HepG2 (cell line): ENCODE measurements at regions of chr9 and their contacts with region 1.

Region 1: DNA sequence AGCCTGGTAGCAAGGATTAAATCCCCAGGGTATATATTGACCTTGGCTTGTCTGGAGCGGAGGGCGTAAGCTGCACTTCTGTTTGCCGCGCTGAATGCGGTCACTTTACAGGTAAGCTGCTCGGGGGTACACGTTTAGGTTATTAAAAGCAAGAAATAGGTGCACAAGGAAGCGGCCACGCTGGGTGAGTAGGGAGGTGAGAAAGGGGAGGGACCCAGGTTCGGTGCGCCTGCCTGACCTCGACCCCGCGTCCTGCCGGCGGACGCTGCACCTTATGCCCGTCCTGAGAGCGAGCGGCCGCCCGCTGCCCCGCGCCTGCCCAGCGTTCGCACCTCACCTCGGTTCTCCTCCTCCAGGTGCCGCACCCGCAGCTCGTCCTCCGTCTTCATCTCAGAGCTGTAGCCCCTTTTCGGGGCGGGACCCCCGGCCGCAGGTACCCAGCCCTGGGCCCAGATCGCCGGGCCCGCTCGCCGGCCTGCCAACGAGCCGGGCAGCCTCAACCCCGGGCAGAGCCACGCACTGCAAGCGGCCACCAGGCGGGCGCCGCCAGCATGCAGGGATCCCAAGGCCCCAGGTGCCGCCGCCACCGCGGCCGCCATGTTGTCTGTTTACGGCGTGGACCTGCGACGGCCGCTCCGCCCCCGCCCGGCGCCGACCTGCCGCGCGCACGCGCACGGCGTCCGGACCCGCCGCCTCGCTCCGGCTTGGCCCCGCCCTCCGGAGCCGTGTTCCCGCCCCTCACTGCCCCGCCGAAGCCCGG is at the start of gene AUH:
- DNase-seq: peak; percentile 60
- ATAC-seq: peak; percentile 92
- H3K4me3 ChIP-seq: peak within 1 kb of the TSS; percentile 95 to 99 (median 98)
- H3K27ac ChIP-seq: peak within 1 kb of the TSS; percentile 84
- H3K4me1 ChIP-seq: peaks cover 45% of the 10 kb centered on the region
- H3K27me3 ChIP-seq: no peaks in the 10 kb centered on the region; a peak in 1 of 5 replicates
- CTCF ChIP-seq: no peak
- EP300 ChIP-seq: no peak
- POLR2A ChIP-seq: peak; percentile 61 to 70
- RAD21 ChIP-seq: peak; percentile 46; the same call in 1 of the 2 replicates
- total RNA-seq, gene AUH: 31.9 and 35.7 TPM in 2 replicates

Region 2: DNA sequence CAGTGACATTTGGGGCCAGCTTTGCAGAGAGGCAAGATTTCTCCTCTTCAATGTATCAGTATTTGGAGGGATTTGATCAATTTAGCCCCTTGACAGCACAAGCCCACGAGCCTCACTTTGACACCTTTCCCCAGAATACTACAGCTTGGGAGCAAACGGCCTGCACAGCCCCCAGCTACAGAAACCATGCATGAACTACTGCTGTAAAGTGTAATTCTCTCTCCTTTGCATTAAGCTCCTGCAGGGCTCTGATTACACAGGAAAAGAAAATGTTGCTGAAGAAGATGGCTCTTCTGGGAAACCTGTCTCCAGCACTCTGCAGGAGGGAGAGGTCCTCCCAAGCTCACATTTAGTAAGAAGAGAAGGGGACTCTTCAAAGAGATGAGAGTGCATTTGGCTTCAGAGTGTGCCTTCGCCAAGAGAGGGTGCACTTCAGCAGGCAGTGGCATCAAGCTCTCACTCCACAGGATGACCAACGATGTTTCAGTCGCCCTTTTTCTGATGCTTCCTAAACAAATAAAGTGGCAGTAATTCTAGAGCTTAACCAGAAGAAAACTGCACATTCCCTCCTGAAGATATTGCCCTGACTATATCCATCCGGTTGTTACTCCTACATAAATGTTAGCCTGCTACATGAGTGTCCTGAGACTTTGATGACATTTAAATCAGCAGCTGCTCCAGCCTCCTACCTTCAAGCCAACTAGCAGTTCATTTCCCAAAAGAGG is 271.9 kb before region 1 on chr9:
- CTCF ChIA-PET with region 1: no interaction called
- POLR2A ChIA-PET with region 1: no interaction called
- in situ Hi-C with region 1: no loop called
- intact Hi-C with region 1: loop called (anchors 10 kb)
- DNase-seq: peak; percentile 52
- ATAC-seq: peak; percentile 96
- H3K4me3 ChIP-seq: no peak overlapping the region
- H3K27ac ChIP-seq: peak overlapping the region; percentile 2
- H3K4me1 ChIP-seq: peaks cover 32% of the 10 kb centered on the region
- H3K27me3 ChIP-seq: no peaks in the 10 kb centered on the region
- CTCF ChIP-seq: peak; percentile 82
- EP300 ChIP-seq: no peak
- POLR2A ChIP-seq: no peak
- RAD21 ChIP-seq: peak; percentile 74; the same call in 1 of the 2 replicates

Region 3: GRCh38 chr9:91177661-91178280 is 183.7 kb before region 1 on chr9:
- CTCF ChIA-PET with region 1: no interaction called
- POLR2A ChIA-PET with region 1: no interaction called
- in situ Hi-C with region 1: no loop called
- intact Hi-C with region 1: no loop called
- DNase-seq: no peak
- ATAC-seq: no peak
- H3K4me3 ChIP-seq: no peak overlapping the region
- H3K27ac ChIP-seq: no peak overlapping the region
- H3K4me1 ChIP-seq: peaks cover 17% of the 10 kb centered on the region
- H3K27me3 ChIP-seq: no peaks in the 10 kb centered on the region
- CTCF ChIP-seq: no peak
- EP300 ChIP-seq: no peak
- POLR2A ChIP-seq: no peak
- RAD21 ChIP-seq: no peak

Region 4: GRCh38 chr9:92100574-92100911 is 739.1 kb after region 1 on chr9:
- CTCF ChIA-PET with region 1: no interaction called
- POLR2A ChIA-PET with region 1: no interaction called
- in situ Hi-C with region 1: no loop called
- intact Hi-C with region 1: no loop called
- DNase-seq: no peak
- ATAC-seq: peak; percentile 26; the same call in 1 of the 3 replicates
- H3K4me3 ChIP-seq: no peak overlapping the region
- H3K27ac ChIP-seq: no peak overlapping the region
- H3K4me1 ChIP-seq: no peaks in the 10 kb centered on the region
- H3K27me3 ChIP-seq: no peaks in the 10 kb centered on the region
- CTCF ChIP-seq: no peak
- EP300 ChIP-seq: no peak
- POLR2A ChIP-seq: no peak
- RAD21 ChIP-seq: no peak